ENCODE measurements at regions of chr16 and their contacts with region 1.

Region 1: DNA sequence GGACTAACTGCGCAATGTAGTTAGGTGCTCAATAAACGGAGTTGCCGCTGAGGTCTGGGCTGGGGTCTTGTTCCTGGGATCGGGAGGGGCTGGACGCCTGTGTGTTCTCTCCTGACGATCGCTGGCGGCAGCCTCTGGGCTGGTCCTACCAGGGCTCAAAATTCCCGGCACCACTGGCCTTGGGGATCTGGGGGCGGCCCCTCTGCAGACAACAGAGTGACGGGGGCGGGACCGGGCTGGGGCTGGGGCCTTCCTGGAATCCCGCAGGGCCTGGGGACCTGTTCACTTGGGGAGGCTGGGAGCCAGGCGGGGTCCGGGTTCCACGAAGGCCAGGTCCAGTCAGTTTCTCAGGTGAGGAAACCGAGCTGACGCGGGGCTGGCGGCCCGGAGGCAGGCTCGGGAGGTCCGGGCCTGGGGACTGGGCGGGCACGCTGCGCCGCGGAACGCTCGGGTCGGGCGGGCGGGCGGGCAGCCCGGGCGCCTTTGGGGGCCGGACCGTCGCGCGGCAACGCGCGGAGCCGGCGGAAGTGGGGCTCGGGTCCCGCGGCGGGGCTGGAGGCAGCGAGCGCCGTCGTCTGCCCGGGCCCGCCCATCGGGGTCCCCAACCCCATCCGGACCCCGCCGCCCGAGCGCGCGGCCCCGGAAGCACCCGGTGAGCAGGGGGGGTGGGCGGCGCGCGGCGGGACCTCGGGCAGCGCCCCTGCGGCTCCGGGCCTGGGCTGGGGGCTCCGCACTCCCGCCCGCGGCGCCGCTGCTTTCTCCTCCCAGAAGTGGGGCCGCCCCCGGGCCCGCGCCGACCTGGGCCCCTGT is at the start of gene PIGQ:
- DNase-seq: peak; percentile 91
- H3K4me3 Mint-ChIP-seq: peak within 1 kb of the TSS; percentile 89
- H3K27ac Mint-ChIP-seq: peak within 1 kb of the TSS; percentile 93
- H3K4me1 Mint-ChIP-seq: peaks cover 24% of the 10 kb centered on the region
- H3K27me3 Mint-ChIP-seq: no peaks in the 10 kb centered on the region
- total RNA-seq, gene PIGQ: 43.2 and 50.3 TPM in 2 replicates

Region 2: DNA sequence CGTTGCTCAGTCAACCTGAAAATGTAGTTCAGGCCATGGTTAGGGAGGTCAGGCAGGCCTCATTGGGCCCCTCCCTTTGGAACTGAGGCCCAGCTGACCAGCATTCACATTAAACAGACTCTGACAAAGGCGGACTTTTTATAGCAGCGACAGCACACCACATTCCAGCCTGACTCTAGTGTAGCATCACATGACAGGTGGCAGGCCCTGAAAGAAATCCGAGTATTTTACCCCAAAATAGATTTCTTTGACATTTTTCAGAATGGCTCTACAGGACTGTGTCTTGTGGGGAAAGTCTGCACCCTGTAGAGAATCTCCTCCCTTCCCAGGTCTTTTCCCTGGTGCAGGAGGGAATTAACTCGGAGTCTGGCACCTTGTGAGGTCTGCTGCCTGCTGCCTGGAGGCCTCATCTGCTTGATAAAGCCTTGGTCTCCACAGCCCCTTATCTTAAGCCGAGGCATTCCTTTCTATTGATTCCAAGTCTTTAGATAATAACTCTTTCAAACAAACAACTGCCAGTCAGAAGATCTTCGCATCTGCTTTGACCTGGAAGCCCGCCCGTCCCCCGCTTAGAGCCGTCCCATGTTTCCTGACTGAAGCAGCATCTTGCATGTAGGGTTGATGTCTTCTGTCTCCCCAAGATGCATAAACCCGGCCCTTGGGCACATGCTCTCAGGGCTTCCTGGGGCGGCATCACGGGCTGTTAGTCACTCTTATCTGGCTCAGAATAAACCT is 86.1 kb before region 1 on chr16:
- intact Hi-C with region 1: no loop called
- DNase-seq: no peak
- H3K4me3 Mint-ChIP-seq: no peak overlapping the region
- H3K27ac Mint-ChIP-seq: no peak overlapping the region
- H3K4me1 Mint-ChIP-seq: no peaks in the 10 kb centered on the region
- H3K27me3 Mint-ChIP-seq: no peaks in the 10 kb centered on the region

Region 3: GRCh38 chr16:527006-527753 is 42.5 kb before region 1 on chr16 and contains the start of gene CAPN15:
- intact Hi-C with region 1: loop called (anchors 2 kb)
- DNase-seq: peak; percentile 96
- H3K4me3 Mint-ChIP-seq: peak within 1 kb of the TSS; percentile 94
- H3K27ac Mint-ChIP-seq: peak within 1 kb of the TSS; percentile 95
- H3K4me1 Mint-ChIP-seq: peaks cover 18% of the 10 kb centered on the region
- H3K27me3 Mint-ChIP-seq: no peaks in the 10 kb centered on the region
- total RNA-seq, gene CAPN15: 121 and 124 TPM in 2 replicates

Region 4: DNA sequence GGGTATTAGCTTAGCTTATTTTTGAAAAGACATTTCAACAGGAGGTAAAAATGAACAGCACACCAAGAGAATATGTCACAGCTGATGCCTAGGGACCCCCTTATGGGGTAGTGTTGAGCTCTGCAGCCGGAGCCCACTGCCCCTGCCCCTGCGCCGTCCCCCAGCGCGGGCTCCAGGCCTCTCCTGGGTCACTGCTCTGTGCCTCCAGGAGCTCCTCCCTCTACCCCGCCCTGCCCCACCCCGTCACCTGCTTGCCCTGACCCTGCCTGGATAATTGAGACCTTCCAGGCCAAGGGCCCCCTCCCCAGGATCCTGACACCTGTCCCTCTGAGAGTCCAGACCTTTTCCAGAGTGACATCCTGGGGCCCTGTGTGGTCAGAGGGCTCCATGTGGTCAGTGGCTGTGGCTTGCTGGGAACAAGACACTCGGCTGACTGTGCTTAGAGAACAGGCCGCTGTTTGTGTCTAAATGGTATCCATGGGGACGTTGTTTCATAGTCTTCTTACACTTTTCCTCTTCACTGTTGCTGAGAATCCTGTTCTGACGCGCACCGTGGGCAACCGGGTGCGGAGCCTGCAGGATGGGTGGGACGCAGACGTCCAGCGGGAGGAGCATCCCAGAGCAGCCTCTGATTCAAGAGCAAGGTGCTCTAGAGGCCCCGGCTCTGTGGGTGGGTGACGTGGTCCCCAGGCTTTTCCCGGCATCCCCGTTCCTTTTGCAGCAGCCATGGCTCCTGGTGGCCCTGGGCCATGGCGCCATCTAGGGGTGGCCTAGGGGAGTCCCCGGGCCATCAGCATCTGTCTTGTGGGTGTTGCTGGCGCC is 41.1 kb after region 1 on chr16:
- intact Hi-C with region 1: loop called (anchors 10 kb)
- DNase-seq: peak; percentile 79
- H3K4me3 Mint-ChIP-seq: no peak overlapping the region
- H3K27ac Mint-ChIP-seq: no peak overlapping the region
- H3K4me1 Mint-ChIP-seq: peaks cover 2% of the 10 kb centered on the region
- H3K27me3 Mint-ChIP-seq: no peaks in the 10 kb centered on the region

Region 5: GRCh38 chr16:667780-668518 is 98.3 kb after region 1 on chr16 and contains the start of gene RHOT2:
- intact Hi-C with region 1: loop called (anchors 10 kb)
- DNase-seq: peak; percentile 99
- H3K4me3 Mint-ChIP-seq: peak within 1 kb of the TSS; percentile 84
- H3K27ac Mint-ChIP-seq: peak within 1 kb of the TSS; percentile 92
- H3K4me1 Mint-ChIP-seq: peaks cover 4% of the 10 kb centered on the region
- H3K27me3 Mint-ChIP-seq: no peaks in the 10 kb centered on the region
- total RNA-seq, gene RHOT2: 172 and 183 TPM in 2 replicates

Region 6: DNA sequence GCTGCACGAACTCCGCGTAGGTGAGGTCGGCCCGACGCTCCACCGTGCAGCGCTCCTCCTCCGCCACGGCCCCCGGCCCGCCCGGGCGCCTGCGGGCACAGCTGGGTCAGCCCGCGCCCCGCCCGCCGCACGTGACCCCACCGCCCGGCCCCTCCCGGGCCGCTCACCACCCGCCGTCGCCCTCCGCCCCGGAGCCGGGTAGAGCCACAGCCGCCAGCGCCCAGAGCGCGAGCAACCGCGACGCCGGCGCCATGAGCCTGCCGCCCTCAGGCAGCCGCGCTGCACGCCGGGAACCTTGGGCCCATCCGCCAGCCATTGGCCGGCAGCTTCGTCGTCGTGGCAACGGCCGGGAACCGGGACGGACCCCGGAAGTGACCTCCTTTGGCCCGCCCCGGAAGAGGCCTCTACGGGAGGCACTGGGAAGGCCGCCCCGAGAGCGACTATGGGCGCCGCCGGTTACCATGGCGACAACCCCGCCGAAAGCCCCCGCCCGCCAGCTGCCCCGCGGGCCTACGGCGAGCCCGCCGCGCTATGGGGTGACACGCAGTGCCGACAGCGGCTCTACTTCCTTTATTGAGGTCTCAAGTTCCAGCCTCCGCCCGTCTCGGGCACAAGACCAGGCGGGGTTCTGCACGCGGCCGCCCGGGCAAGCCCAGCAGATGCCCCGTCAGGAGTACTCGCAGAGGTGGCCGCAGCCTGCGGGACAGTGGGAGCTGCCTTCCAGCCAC is 114.6 kb after region 1 on chr16 and contains the start of gene JMJD8:
- intact Hi-C with region 1: no loop called
- DNase-seq: peak; percentile 99
- H3K4me3 Mint-ChIP-seq: peak within 1 kb of the TSS; percentile 87
- H3K27ac Mint-ChIP-seq: peak within 1 kb of the TSS; percentile 82
- H3K4me1 Mint-ChIP-seq: peaks cover 12% of the 10 kb centered on the region
- H3K27me3 Mint-ChIP-seq: no peaks in the 10 kb centered on the region
- total RNA-seq, gene JMJD8: 60.3 and 61.1 TPM in 2 replicates

Region 7: GRCh38 chr16:1125471-1125870 is 555.8 kb after region 1 on chr16:
- intact Hi-C with region 1: no loop called
- DNase-seq: peak; percentile 72
- H3K4me3 Mint-ChIP-seq: no peak overlapping the region
- H3K27ac Mint-ChIP-seq: no peak overlapping the region
- H3K4me1 Mint-ChIP-seq: no peaks in the 10 kb centered on the region
- H3K27me3 Mint-ChIP-seq: no peaks in the 10 kb centered on the region